ENCODE measurements at regions of chr20 and their contacts with region 1.

Region 1: DNA sequence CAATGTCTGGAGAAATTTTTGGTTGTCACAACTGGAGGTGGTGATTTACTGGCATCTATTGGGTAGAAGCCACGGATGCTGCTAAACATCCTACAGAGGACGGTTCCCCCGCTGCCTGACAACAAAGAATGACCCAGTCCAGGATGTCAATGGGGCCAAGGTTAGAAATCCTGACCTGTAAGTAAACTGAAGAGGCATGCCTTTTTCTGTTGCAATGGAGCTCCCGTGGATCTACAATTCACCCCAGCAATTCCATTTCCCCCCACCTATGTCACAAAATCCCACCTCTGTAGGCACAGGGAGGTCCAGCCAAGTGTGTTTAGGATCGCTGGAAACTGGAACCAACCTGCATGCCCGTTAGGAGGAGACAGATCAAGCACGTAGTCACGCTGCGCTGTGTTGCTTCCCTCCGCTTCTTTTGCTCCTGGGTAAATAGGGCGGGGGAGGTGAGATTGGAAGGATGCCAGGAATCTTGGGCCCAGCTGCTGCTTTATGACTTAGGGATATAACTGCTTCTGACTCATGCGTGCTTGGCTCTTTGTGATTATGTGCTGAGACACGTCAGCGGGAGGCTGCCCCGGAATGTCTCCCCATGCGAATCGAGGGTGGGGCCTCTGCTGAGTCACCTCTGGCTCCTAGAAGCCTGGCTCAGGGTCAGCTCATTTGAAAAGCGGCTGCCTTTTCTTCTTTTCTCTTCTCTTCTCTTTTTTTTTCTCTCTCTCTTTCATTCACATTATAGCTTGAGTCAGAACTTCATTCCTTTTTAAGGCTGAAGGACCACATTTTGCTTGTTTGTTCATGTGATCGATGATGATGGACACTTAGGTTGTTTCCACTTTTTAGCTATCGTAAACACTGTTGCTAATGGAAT is 12.4 kb upstream of the PEDS1 start:
- DNase-seq: peak; percentile 100
- H3K4me3 ChIP-seq: peak overlapping the region in 3 of 4 donors; percentile 16 to 42 (median 33)
- H3K27ac ChIP-seq: peak overlapping the region; percentile 86
- H3K4me1 ChIP-seq: peaks cover 0 to 28% (median 20%) of the 10 kb centered on the region in 4 donors
- H3K27me3 ChIP-seq: no peaks in the 10 kb centered on the region
- CTCF ChIP-seq: no peak
- EP300 ChIP-seq: peak in 3 of 4 donors; percentile 53 to 96 (median 82)
- POLR2A ChIP-seq: no peak

Region 2: DNA sequence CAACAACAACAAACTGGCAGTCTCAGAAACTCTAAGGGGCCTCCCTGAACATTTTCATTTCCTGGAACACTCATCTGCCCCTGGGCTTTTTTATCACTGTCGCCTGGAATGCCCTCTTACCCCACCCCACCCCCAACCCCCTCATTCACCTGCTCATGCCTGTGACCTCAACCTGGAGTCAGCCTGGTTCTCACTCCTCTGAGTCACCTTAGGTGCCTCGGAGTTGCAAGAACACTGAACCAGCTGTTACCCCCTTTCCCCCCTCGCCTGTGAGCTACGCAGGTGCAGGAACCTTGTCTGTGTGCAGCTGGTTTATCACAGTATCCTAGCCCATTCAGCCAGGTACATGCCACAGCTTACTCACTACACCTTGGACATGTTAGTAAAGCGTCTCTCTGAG is 196.0 kb before region 1 on chr20:
- intact Hi-C with region 1: no loop called
- DNase-seq: no peak
- H3K4me3 ChIP-seq: no peak overlapping the region
- H3K27ac ChIP-seq: no peak overlapping the region
- H3K4me1 ChIP-seq: no peaks in the 10 kb centered on the region
- H3K27me3 ChIP-seq: no peaks in the 10 kb centered on the region
- CTCF ChIP-seq: no peak
- EP300 ChIP-seq: no peak
- POLR2A ChIP-seq: no peak

Region 3: GRCh38 chr20:49982346-49983122 is 183.4 kb before region 1 on chr20 and contains the start of gene SNAI1:
- intact Hi-C with region 1: loop called (anchors 5 kb)
- DNase-seq: peak; percentile 92
- H3K4me3 ChIP-seq: peak within 1 kb of the TSS; percentile 30 to 56 (median 50)
- H3K27ac ChIP-seq: peak within 1 kb of the TSS; percentile 66 to 83 (median 74)
- H3K4me1 ChIP-seq: peaks cover 3 to 60% (median 57%) of the 10 kb centered on the region in 4 donors
- H3K27me3 ChIP-seq: no peaks in the 10 kb centered on the region
- CTCF ChIP-seq: peak in 2 of 4 experiments; percentile 36 to 45
- EP300 ChIP-seq: no peak
- POLR2A ChIP-seq: peak; percentile 86 to 88
- total RNA-seq, gene SNAI1: 1.1 to 2.6 (median 1.8) TPM

Region 4: GRCh38 chr20:50120897-50121693 is 44.8 kb before region 1 on chr20:
- intact Hi-C with region 1: loop called (anchors 1 kb)
- DNase-seq: peak; percentile 85
- H3K4me3 ChIP-seq: no peak overlapping the region
- H3K27ac ChIP-seq: peak overlapping the region in 3 of 4 donors; percentile 45 to 54 (median 54)
- H3K4me1 ChIP-seq: peaks cover 0 to 15% (median 7%) of the 10 kb centered on the region in 4 donors
- H3K27me3 ChIP-seq: no peaks in the 10 kb centered on the region
- CTCF ChIP-seq: peak; percentile 86 to 95 (median 91)
- EP300 ChIP-seq: no peak
- POLR2A ChIP-seq: no peak

Region 5: GRCh38 chr20:50133474-50134217 is 32.3 kb before region 1 on chr20:
- intact Hi-C with region 1: loop called (anchors 2 kb)
- DNase-seq: no peak
- H3K4me3 ChIP-seq: no peak overlapping the region
- H3K27ac ChIP-seq: peak overlapping the region; percentile 78 to 88 (median 85)
- H3K4me1 ChIP-seq: peaks cover 0 to 63% (median 62%) of the 10 kb centered on the region in 4 donors
- H3K27me3 ChIP-seq: no peaks in the 10 kb centered on the region
- CTCF ChIP-seq: no peak
- EP300 ChIP-seq: no peak
- POLR2A ChIP-seq: no peak

Measured in sigmoid colon (tissue), 7 donors.